Right lobe of liver (tissue), 6 donors: ENCODE measurements at regions of chr12 and their contacts with region 1.

Region 1: GRCh38 chr12:118372541-118373495 is at the start of gene TAOK3:
- DNase-seq: peak; percentile 99
- ATAC-seq: peak; percentile 84 to 95 (median 90)
- H3K4me3 ChIP-seq: peak within 1 kb of the TSS; percentile 77 to 92 (median 87)
- H3K27ac ChIP-seq: peak within 1 kb of the TSS; percentile 94 to 98 (median 95)
- H3K4me1 ChIP-seq: peaks cover 0 to 25% (median 0%) of the 10 kb centered on the region in 4 donors
- H3K27me3 ChIP-seq: no peaks in the 10 kb centered on the region
- CTCF ChIP-seq: no peak
- POLR2A ChIP-seq: peak; percentile 89
- total RNA-seq, gene TAOK3: 12.2 to 21.9 (median 17.7) TPM

Region 2: DNA sequence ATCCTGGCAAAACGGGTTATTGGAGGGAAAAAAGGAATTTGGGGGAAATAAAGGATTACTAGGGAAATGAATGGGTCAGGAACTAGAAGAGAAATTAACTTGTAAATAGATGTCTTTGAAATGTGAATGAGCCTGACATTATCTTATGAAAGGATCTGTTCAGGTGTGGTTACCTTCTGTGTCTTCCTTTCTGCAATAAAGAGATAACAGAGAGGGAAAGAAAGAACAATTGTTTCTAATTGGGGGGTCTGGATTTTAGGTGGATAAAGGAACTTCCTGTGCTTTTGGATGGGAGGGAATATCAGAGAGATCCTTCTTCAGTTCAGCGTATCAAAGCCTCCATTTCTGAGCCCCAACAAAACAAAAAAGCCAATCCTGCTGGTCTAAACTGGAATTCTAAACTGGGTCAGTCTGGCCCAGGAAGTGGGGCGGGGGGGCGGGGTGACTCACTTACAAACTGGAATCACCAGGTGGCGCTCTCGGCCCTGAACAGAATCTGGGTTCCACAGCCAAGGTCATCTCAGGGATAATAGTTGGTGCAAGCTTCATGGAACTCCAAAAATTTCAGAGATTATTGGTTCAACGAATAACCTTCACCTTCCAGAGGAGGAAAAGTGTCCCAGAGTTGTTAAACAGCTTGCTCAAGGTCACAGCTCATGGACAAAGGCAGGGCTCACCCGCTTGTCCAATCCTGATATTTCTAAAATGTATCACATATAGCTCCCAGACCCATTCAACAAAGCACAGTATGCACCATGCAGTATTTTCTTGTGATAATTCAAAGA is 252.0 kb before region 1 on chr12:
- intact Hi-C with region 1: loop called in 1 of 2 experiments (anchors 10 kb)
- DNase-seq: peak; percentile 69 to 81 (median 75)
- ATAC-seq: peak; percentile 80 to 89 (median 86)
- H3K4me3 ChIP-seq: no peak overlapping the region
- H3K27ac ChIP-seq: peak overlapping the region; percentile 37 to 76 (median 50)
- H3K4me1 ChIP-seq: peaks cover 0 to 41% (median 16%) of the 10 kb centered on the region in 4 donors
- H3K27me3 ChIP-seq: no peaks in the 10 kb centered on the region
- CTCF ChIP-seq: peak; percentile 29 to 89 (median 85)
- POLR2A ChIP-seq: no peak

Region 3: DNA sequence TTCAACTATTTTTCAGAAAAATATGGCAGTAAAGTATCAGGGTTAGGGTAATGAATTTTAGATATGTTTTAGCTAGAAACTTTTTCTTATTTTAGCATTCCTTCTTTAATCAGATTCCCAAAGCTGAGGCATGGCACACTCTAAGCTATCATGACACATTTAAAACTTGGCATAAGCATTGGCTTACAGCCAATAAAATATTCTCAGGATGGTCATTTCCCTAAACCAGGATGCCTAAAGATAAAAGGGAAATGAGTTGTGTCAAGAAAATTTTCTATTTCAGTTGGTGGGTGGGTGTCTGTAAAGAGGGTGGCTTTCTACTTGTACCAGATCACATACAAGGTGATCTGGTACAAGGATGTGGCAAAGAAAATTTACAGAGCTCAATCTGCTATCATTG is 189.1 kb before region 1 on chr12:
- intact Hi-C with region 1: loop called (anchors 5 to 10 kb)
- DNase-seq: no peak
- ATAC-seq: peak in 1 of 4 donors; percentile 21
- H3K4me3 ChIP-seq: no peak overlapping the region
- H3K27ac ChIP-seq: peak overlapping the region; percentile 40 to 79 (median 52)
- H3K4me1 ChIP-seq: peaks cover 0 to 20% (median 5%) of the 10 kb centered on the region in 4 donors
- H3K27me3 ChIP-seq: no peaks in the 10 kb centered on the region
- CTCF ChIP-seq: no peak
- POLR2A ChIP-seq: no peak

Region 4: DNA sequence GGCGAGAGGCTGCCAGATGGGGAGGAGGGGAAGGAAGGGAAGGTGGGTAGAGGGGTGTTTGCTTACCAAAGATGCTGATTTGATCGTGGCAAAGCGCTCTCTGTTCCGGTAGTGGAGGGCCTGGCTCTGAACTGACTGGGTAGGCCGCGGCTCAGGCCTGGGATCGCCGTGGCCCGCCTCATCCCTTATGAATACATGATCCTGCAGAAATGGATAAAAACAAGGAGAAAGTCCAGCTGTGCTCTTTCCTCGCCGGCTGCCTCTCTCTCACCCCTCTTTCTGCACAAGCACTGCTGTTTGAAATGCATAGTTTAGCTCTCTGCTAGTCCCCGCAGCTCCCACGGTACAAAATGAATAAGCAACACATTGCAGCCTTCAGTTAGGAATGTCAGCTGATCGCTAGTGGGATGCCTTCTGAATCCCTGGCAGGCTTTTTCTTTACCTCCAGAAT is 183.1 kb before region 1 on chr12:
- intact Hi-C with region 1: loop called (anchors 5 to 10 kb)
- DNase-seq: no peak
- ATAC-seq: peak in 1 of 4 donors; percentile 19
- H3K4me3 ChIP-seq: no peak overlapping the region
- H3K27ac ChIP-seq: peak overlapping the region in 1 of 3 donors; percentile 11
- H3K4me1 ChIP-seq: no peaks in the 10 kb centered on the region
- H3K27me3 ChIP-seq: no peaks in the 10 kb centered on the region
- CTCF ChIP-seq: no peak
- POLR2A ChIP-seq: no peak

Region 5: GRCh38 chr12:118237052-118237665 is 135.7 kb before region 1 on chr12:
- intact Hi-C with region 1: no loop called
- DNase-seq: no peak
- ATAC-seq: peak in 3 of 4 donors; percentile 38 to 58 (median 48)
- H3K4me3 ChIP-seq: no peak overlapping the region
- H3K27ac ChIP-seq: no peak overlapping the region
- H3K4me1 ChIP-seq: peaks cover 0 to 3% (median 0%) of the 10 kb centered on the region in 4 donors
- H3K27me3 ChIP-seq: no peaks in the 10 kb centered on the region
- CTCF ChIP-seq: no peak
- POLR2A ChIP-seq: no peak